ENCODE measurements at regions of chr10 and their contacts with region 1.

Region 1: GRCh38 chr10:27360581-27361172 is 120.1 kb upstream of the ACBD5 start:
- DNase-seq: peak; percentile 84

Region 2: GRCh38 chr10:26890956-26891355 is 469.7 kb before region 1 on chr10:
- intact Hi-C with region 1: loop called (anchors 2 kb)
- DNase-seq: no peak

Region 3: GRCh38 chr10:27207350-27207749 is 153.3 kb before region 1 on chr10:
- intact Hi-C with region 1: no loop called
- DNase-seq: no peak

Region 4: DNA sequence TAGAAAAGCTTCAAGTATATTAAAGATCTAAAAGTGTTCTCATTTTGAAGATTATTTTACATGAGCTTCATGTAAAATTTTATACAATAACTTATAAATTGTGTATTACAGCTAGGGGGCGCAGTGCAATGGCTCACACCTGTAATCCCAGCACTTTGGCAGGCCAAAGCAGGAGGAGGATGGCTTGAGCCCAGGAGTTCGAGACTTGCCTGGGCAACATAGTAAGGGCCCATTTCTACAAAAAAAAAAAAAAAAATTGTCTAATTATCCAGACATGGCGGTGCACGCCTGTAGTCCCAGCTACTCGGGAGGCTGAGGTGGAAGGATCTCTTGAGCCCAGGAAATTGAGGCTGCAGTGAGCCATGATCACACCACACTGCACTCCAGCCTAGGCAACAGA is 136.7 kb before region 1 on chr10:
- intact Hi-C with region 1: loop called (anchors 10 kb)
- DNase-seq: no peak

Measured in cardiac septum (tissue), 1 donor.